Activated B cell treated with CpG ODN at 0.5 μM for 24 hours (primary cell): ENCODE measurements at regions of chr17 and their contacts with region 1.

Region 1: DNA sequence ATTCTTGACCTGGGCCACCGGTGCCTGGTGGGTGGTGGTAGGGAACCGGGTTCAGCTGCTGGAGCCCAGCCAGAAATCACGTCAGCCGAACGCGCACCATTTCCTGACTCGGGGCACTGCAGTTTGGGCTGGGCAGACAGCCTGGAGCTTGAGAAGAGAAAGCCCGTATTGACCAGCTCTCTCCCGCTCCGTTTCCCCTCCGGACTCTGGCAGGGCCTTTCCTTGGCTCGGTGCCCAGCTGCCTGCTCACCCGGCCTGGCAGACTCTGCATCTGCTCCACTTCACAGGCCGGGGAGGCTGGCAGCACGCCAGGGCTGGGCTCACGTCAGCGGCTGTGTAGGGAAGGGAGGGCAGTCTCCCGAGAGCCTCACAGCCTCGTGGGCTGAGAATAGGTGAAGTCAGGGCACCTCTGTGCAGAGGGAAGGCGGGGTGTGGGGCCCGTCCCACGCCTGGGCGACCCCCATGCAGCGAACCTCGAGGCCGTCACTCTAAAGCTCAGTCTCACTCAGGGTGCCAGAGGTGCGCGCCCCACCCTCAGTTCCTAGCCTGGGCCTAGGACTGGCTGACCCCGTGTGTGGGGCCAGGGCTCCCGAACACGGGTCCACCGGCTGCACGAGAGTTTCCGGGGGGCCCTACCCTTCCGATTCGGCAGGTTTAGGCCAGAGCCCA is 59.1 kb downstream of the OR1D5 start:
- DNase-seq: peak; percentile 80
- ATAC-seq: peak; percentile 55
- H3K4me3 Mint-ChIP-seq: peak overlapping the region; percentile 72
- H3K27ac Mint-ChIP-seq: peak overlapping the region; percentile 88
- H3K4me1 Mint-ChIP-seq: peaks cover 41% of the 10 kb centered on the region
- H3K27me3 Mint-ChIP-seq: no peaks in the 10 kb centered on the region
- CTCF ChIP-seq: no peak

Region 2: GRCh38 chr17:2711601-2712299 is 292.5 kb before region 1 on chr17 and contains the start of gene CLUH:
- CTCF ChIA-PET with region 1: no interaction called
- POLR2A ChIA-PET with region 1: no interaction called
- intact Hi-C with region 1: loop called (anchors 2 kb)
- DNase-seq: peak; percentile 96
- ATAC-seq: peak; percentile 83
- H3K4me3 Mint-ChIP-seq: peak within 1 kb of the TSS; percentile 90
- H3K27ac Mint-ChIP-seq: peak within 1 kb of the TSS; percentile 83
- H3K4me1 Mint-ChIP-seq: peaks cover 37% of the 10 kb centered on the region
- H3K27me3 Mint-ChIP-seq: no peaks in the 10 kb centered on the region
- CTCF ChIP-seq: no peak
- total RNA-seq, gene CLUH: 101 and 115 TPM in 2 replicates

Region 3: GRCh38 chr17:2796164-2797125 is 207.8 kb before region 1 on chr17 and contains the start of gene RAP1GAP2:
- CTCF ChIA-PET with region 1: no interaction called
- POLR2A ChIA-PET with region 1: interaction called, 12 read pairs
- intact Hi-C with region 1: no loop called
- DNase-seq: peak; percentile 46
- ATAC-seq: peak; percentile 75
- H3K4me3 Mint-ChIP-seq: peak within 1 kb of the TSS; percentile 72
- H3K27ac Mint-ChIP-seq: peak within 1 kb of the TSS; percentile 20
- H3K4me1 Mint-ChIP-seq: peaks cover 77% of the 10 kb centered on the region
- H3K27me3 Mint-ChIP-seq: no peaks in the 10 kb centered on the region
- CTCF ChIP-seq: no peak
- total RNA-seq, gene RAP1GAP2: 2.5 and 2.6 TPM in 2 replicates

Region 4: GRCh38 chr17:2837147-2837561 is 167.1 kb before region 1 on chr17:
- CTCF ChIA-PET with region 1: no interaction called
- POLR2A ChIA-PET with region 1: interaction called, 11 read pairs
- intact Hi-C with region 1: no loop called
- DNase-seq: peak; percentile 63
- ATAC-seq: peak; percentile 100
- H3K4me3 Mint-ChIP-seq: no peak overlapping the region
- H3K27ac Mint-ChIP-seq: no peak overlapping the region
- H3K4me1 Mint-ChIP-seq: peaks cover 9% of the 10 kb centered on the region
- H3K27me3 Mint-ChIP-seq: peaks cover 11% of the 10 kb centered on the region
- CTCF ChIP-seq: no peak

Region 5: GRCh38 chr17:2929881-2930533 is 74.3 kb before region 1 on chr17:
- CTCF ChIA-PET with region 1: interaction called, 7 read pairs
- POLR2A ChIA-PET with region 1: interaction called, 9 read pairs
- intact Hi-C with region 1: loop called (anchors 2 kb)
- DNase-seq: peak; percentile 36
- ATAC-seq: peak; percentile 54
- H3K4me3 Mint-ChIP-seq: no peak overlapping the region
- H3K27ac Mint-ChIP-seq: no peak overlapping the region
- H3K4me1 Mint-ChIP-seq: peaks cover 25% of the 10 kb centered on the region
- H3K27me3 Mint-ChIP-seq: no peaks in the 10 kb centered on the region
- CTCF ChIP-seq: no peak

Region 6: GRCh38 chr17:3630781-3631180 is 626.5 kb after region 1 on chr17:
- CTCF ChIA-PET with region 1: no interaction called
- POLR2A ChIA-PET with region 1: interaction called, 10 read pairs
- intact Hi-C with region 1: no loop called
- DNase-seq: no peak
- ATAC-seq: no peak
- H3K4me3 Mint-ChIP-seq: no peak overlapping the region
- H3K27ac Mint-ChIP-seq: no peak overlapping the region
- H3K4me1 Mint-ChIP-seq: peaks cover 10% of the 10 kb centered on the region
- H3K27me3 Mint-ChIP-seq: no peaks in the 10 kb centered on the region
- CTCF ChIP-seq: no peak